CD8-positive, alpha-beta T cell (primary cell): ENCODE measurements at regions of chr13 and their contacts with region 1.

Region 1: GRCh38 chr13:43905435-43906031 is 25.8 kb downstream of the LACC1 start:
- DNase-seq: peak in 4 of 9 experiments; percentile 15 to 74 (median 42)
- ATAC-seq: peak; percentile 79
- H3K4me3 ChIP-seq: no peak overlapping the region
- H3K4me3 Mint-ChIP-seq: no peak overlapping the region
- H3K27ac ChIP-seq: no peak overlapping the region
- H3K27ac Mint-ChIP-seq: no peak overlapping the region
- H3K4me1 ChIP-seq: no peaks in the 10 kb centered on the region
- H3K4me1 Mint-ChIP-seq: no peaks in the 10 kb centered on the region
- H3K27me3 ChIP-seq: no peaks in the 10 kb centered on the region
- H3K27me3 Mint-ChIP-seq: peaks cover 14% of the 10 kb centered on the region
- CTCF ChIP-seq: peak; percentile 82

Region 2: DNA sequence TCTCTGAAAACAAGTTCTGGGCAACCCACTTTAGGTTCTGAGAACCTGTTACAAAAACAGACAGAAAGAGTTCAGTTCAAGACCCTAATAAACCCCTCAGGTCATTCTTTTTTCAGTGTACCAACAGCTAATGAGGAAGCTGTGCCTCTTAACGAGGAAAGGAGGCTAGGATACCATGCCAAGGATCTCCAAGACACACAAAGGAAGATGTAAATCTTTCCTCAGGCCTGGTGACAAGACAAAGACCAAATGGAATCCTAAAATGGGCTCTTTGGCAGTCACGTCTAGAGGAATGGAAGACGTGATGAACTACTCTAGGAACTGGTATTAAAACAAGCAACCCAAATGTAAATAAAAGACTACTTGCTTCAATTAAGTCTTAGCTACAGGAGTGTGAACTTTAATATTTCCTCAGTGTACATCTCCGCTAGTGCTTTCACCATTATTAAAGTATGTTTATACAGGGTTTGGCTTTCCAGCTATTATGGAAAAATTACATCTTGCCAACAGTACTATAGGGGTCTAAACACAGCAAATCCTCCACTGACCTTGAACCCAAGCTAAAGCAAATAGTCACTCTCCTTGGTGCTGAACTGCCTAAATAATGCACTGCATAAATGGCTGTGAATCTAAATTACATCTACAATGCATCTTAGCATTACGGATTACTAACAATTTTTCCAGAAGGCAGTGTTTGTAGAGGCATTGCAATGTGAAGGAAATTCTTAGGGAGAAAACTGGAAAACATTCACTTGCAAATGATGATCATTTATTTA is 161.1 kb before region 1 on chr13:
- CTCF ChIA-PET with region 1: no interaction called
- POLR2A ChIA-PET with region 1: no interaction called
- intact Hi-C with region 1: no loop called
- DNase-seq: no peak
- ATAC-seq: no peak
- H3K4me3 ChIP-seq: no peak overlapping the region
- H3K4me3 Mint-ChIP-seq: no peak overlapping the region
- H3K27ac ChIP-seq: no peak overlapping the region
- H3K27ac Mint-ChIP-seq: no peak overlapping the region
- H3K4me1 ChIP-seq: no peaks in the 10 kb centered on the region
- H3K4me1 Mint-ChIP-seq: no peaks in the 10 kb centered on the region
- H3K27me3 ChIP-seq: no peaks in the 10 kb centered on the region
- H3K27me3 Mint-ChIP-seq: peaks cover 2% of the 10 kb centered on the region
- CTCF ChIP-seq: no peak

Region 3: DNA sequence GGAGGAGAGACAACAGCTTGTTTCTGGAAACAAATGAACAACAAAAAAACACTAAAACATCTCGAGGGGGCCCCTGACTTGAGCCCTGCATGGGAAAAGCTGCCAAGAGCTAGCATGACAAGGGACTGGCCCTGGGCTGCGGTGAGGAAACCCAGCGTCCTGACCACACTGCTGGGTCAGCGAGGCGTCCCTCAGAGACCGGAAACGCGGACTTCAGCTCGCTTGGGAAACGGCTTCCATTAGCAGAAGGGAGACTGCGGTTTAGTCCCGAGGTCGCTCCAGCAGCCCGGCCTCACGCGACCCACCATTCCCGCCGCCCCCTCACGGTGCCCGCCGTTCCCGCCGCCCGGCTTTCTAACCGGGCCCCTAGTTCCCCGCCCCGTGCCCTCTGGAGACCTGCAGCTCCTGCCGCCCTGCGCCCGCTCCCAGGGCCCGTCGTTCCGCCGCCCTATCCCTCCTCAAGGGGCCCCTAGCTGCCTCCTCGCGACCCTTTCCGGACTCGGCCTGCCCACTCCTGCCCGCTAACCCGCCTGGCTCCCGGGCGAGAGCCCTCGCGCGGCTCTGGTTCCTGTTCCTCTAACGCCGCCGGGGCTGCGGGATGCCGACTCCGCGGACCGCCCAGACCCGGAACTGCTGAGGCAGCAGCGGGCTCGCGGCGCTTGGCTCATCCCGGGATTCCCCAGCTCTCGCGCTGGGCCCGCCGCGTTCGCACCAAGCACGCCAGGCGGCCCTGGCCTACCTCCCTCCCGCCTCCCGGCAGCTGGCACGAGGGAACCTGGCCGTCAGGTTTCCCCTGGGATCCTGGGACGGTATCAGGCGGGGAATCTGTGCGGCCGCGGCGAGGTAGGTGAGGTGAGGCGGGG is 26.4 kb before region 1 on chr13 and contains the start of gene CCDC122:
- CTCF ChIA-PET with region 1: interaction called, 13 read pairs
- POLR2A ChIA-PET with region 1: no interaction called
- intact Hi-C with region 1: no loop called
- DNase-seq: peak; percentile 37 to 89 (median 69)
- ATAC-seq: peak; percentile 78
- H3K4me3 ChIP-seq: peak within 1 kb of the TSS; percentile 56 to 66
- H3K4me3 Mint-ChIP-seq: peak within 1 kb of the TSS; percentile 90
- H3K27ac ChIP-seq: peak within 1 kb of the TSS in 1 of 2 experiments; percentile 61
- H3K27ac Mint-ChIP-seq: peak within 1 kb of the TSS; percentile 84
- H3K4me1 ChIP-seq: peaks cover 10% of the 10 kb centered on the region
- H3K4me1 Mint-ChIP-seq: peaks cover 14% of the 10 kb centered on the region
- H3K27me3 ChIP-seq: no peaks in the 10 kb centered on the region
- H3K27me3 Mint-ChIP-seq: peaks cover 11% of the 10 kb centered on the region
- CTCF ChIP-seq: no peak
- total RNA-seq, gene CCDC122: not detected

Region 4: DNA sequence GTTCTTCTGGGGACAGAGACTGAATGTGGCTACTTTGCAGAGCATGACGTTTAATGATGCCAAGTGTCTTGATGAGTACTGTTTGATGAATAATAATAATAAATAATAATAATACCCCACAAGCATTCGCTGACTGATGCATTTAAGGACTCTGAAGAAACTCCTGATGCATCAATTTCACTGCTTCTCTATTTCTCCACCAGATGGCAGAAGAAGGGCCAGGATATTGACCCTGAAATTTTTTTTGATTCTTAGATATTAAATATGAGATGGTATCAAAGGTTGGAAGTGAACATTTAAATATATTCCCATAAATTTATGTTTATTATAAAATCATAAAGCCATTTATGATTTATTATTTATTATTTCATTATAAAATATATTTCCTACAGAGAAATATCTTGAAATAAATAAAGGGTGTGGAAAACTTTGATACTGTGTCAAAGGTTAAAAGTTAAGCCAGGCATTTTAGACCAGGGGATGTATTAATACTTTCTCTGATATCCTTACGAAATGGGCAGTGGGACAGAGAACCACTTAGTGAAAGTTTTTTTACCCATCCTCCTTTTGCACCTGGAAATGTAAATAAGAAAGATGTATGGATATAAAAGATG is 145.0 kb after region 1 on chr13:
- CTCF ChIA-PET with region 1: no interaction called
- POLR2A ChIA-PET with region 1: no interaction called
- intact Hi-C with region 1: loop called (anchors 2 to 5 kb)
- DNase-seq: peak in 2 of 9 experiments; percentile 55 to 64
- ATAC-seq: peak; percentile 49
- H3K4me3 ChIP-seq: no peak overlapping the region
- H3K4me3 Mint-ChIP-seq: no peak overlapping the region
- H3K27ac ChIP-seq: no peak overlapping the region
- H3K27ac Mint-ChIP-seq: no peak overlapping the region
- H3K4me1 ChIP-seq: no peaks in the 10 kb centered on the region
- H3K4me1 Mint-ChIP-seq: no peaks in the 10 kb centered on the region
- H3K27me3 ChIP-seq: peaks cover 0 to 5% of the 10 kb centered on the region in 2 experiments
- H3K27me3 Mint-ChIP-seq: peaks cover 25% of the 10 kb centered on the region
- CTCF ChIP-seq: peak; percentile 77

Region 5: DNA sequence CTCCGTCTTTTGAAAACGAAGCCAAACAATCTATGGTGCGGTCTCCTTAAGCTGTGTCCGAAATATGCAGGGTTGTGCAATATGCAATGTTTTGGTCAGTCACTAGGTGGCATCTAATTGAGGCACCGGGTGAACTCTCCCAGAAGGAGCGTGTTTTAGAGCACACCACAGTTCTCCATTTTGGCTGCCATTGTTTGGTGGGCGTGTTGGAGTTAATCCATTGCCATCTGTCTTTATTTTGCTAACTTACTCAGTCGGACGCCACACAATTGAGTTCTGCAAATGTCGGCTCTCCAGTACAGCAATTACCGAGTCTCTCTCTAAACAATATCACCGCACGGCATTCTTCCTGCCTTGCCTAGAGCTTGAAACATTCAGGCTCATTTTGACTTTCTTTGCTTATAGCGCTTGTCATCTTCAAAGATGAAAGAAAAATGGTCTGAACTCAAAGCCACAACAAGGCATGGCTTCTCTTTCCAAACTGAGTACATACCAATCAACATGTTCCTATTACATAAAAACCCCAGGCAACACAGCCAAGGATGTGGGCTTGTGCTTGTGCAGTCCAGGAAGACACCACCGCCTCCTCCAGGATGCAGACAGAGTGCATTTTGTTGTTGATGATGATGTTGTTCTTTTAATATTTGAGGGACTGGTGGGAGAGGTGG is 286.1 kb after region 1 on chr13:
- CTCF ChIA-PET with region 1: no interaction called
- POLR2A ChIA-PET with region 1: no interaction called
- intact Hi-C with region 1: loop called in 1 of 2 experiments (anchors 5 kb)
- DNase-seq: peak in 8 of 9 experiments; percentile 7 to 76 (median 38)
- ATAC-seq: peak; percentile 80
- H3K4me3 ChIP-seq: no peak overlapping the region
- H3K4me3 Mint-ChIP-seq: peak overlapping the region; percentile 40
- H3K27ac ChIP-seq: peak overlapping the region; percentile 5 to 9
- H3K27ac Mint-ChIP-seq: peak overlapping the region; percentile 87
- H3K4me1 ChIP-seq: peaks cover 9% of the 10 kb centered on the region
- H3K4me1 Mint-ChIP-seq: peaks cover 31% of the 10 kb centered on the region
- H3K27me3 ChIP-seq: no peaks in the 10 kb centered on the region
- H3K27me3 Mint-ChIP-seq: no peaks in the 10 kb centered on the region
- CTCF ChIP-seq: peak; percentile 26

Region 6: DNA sequence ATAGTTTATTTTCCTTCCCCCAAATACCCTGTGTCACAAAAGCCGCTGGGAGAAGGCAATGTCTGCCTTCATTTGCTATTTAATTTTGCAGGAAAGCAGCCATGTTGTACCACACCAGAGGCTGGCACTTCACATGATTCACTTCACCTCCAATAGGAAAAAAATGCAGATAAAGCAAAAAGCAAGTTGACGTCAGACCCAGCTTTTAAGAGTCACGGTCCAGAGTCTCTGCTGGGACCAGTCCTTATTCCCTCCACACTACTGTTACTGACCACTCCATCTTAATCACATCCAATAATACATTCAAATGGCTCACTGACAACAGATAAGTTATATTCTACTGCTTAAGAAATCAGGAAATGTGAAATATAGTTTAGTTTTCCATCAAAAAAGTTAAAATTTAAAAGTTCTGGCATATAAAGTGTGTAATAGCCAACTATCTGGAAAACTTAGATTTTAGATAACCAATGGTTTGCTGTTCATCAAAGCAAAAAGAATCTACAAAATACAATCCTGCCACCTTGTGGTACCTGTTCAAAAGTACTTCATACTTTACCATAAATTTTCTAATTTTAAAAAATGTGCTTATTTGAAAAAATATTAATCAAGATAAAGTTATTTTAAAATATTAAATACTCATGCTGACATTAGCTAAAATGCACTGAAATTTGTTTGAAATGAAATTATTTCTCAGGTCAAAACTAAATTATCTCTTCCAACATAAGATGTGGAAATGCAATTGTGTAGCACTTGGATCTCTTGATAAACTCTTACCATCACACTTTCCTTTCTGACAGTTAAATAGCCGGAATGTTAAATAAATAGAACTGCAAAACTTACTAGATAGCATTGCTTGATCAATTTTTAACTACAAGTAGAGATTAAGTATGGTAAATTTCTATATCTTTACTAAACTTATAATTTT is 565.4 kb after region 1 on chr13:
- CTCF ChIA-PET with region 1: interaction called, 21 read pairs
- POLR2A ChIA-PET with region 1: no interaction called
- intact Hi-C with region 1: loop called (anchors 1 kb)
- DNase-seq: peak in 2 of 9 experiments; percentile 41 to 53
- ATAC-seq: no peak
- H3K4me3 ChIP-seq: no peak overlapping the region
- H3K4me3 Mint-ChIP-seq: no peak overlapping the region
- H3K27ac ChIP-seq: no peak overlapping the region
- H3K27ac Mint-ChIP-seq: no peak overlapping the region
- H3K4me1 ChIP-seq: no peaks in the 10 kb centered on the region
- H3K4me1 Mint-ChIP-seq: peaks cover 3% of the 10 kb centered on the region
- H3K27me3 ChIP-seq: no peaks in the 10 kb centered on the region
- H3K27me3 Mint-ChIP-seq: no peaks in the 10 kb centered on the region
- CTCF ChIP-seq: peak; percentile 47

Region 7: DNA sequence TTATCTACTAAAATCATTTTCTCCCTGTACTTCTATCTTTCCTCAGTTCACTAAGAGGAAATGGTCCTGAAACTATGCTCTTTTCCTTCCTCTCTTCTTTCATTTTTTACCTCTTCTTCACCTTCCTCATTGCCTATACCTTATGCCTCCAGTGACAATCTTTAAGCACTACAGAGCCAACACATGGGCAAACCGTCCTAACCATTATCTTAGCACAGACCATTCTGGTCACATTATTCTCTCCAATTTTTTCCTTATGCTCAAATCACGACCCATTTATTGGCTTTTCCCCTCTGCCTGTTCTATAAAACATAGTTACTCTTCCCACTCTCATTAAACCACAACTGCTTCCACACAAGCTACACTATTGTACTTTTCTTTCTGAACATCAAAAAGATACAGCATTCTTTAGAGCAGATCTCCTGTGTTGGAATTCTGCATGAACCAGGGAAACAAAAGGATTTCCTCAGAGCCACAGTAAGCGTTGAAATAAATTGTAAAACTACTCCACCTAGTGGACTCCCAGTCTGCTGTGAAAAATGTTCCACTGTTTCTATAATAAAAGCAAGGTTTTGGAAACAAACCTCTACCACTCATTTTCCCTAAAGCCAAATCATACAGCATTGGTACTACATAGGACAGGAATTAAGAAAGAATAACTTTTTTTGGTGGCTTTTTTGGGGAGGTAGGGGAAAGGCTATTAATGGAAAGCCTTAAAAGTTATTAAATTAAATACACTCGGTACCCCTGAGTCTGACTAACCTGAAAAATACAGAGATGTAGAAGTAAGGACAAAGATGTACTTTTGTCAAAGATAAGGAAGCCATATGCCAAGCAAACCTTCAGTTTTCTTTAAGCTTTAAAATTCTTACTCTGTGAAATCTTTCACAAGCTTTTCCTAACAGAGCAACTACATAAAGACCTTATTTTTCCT is 1064.3 kb after region 1 on chr13:
- CTCF ChIA-PET with region 1: no interaction called
- POLR2A ChIA-PET with region 1: no interaction called
- intact Hi-C with region 1: loop called (anchors 2 to 5 kb)
- DNase-seq: peak in 2 of 9 experiments; percentile 32 to 50
- ATAC-seq: no peak
- H3K4me3 ChIP-seq: no peak overlapping the region
- H3K4me3 Mint-ChIP-seq: no peak overlapping the region
- H3K27ac ChIP-seq: no peak overlapping the region
- H3K27ac Mint-ChIP-seq: no peak overlapping the region
- H3K4me1 ChIP-seq: no peaks in the 10 kb centered on the region
- H3K4me1 Mint-ChIP-seq: no peaks in the 10 kb centered on the region
- H3K27me3 ChIP-seq: no peaks in the 10 kb centered on the region
- H3K27me3 Mint-ChIP-seq: no peaks in the 10 kb centered on the region
- CTCF ChIP-seq: peak; percentile 67